Esophagus muscularis mucosa (tissue), 4 donors: ENCODE measurements at regions of chrX and their contacts with region 1.

Region 1: GRCh38 chrX:38774249-38774648 is 27.0 kb upstream of the MID1IP1 start:
- DNase-seq: no peak
- H3K4me3 ChIP-seq: no peak overlapping the region
- H3K27ac ChIP-seq: no peak overlapping the region
- H3K4me1 ChIP-seq: no peaks in the 10 kb centered on the region
- H3K27me3 ChIP-seq: no peaks in the 10 kb centered on the region
- CTCF ChIP-seq: no peak
- EP300 ChIP-seq: no peak
- POLR2A ChIP-seq: no peak

Region 2: DNA sequence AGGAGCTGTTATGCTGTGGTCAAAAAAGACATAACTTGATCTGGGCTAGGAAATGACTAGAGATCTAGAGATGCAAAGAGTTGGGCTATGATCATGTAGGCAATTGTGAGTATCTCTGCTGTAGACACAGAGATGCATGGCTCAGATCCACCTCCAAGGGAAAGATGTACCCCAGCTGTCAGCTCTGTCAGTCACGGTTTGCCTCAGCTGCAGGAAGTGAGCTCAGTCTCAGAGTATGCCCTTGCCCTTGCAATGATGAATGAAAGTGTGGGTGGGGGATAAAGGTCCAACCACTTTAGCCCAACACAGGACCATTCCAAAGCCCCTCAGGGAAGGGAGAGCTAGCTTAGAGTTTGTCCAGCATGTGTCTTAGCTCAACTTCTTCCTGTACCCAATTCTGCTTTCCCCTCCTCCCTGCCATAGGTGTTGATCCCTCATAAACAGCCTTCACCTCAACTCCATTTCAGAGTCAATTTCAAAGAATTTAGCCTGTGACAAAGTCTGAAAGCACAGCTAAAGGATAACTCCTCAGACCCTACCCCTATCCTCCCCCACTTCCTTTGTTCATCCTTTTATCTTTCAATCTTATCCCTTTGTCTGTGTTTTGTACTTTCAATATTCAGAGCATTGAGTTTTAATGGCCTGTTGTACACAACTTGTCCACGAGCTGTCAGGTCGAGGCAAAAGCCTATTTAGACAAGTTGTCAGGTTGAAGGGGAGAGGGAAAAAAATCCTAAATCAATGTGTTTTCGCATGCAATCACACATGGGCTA is 117.6 kb after region 1 on chrX:
- intact Hi-C with region 1: no loop called
- DNase-seq: no peak
- H3K4me3 ChIP-seq: no peak overlapping the region
- H3K27ac ChIP-seq: no peak overlapping the region
- H3K4me1 ChIP-seq: no peaks in the 10 kb centered on the region
- H3K27me3 ChIP-seq: no peaks in the 10 kb centered on the region
- CTCF ChIP-seq: no peak
- EP300 ChIP-seq: no peak
- POLR2A ChIP-seq: no peak

Region 3: DNA sequence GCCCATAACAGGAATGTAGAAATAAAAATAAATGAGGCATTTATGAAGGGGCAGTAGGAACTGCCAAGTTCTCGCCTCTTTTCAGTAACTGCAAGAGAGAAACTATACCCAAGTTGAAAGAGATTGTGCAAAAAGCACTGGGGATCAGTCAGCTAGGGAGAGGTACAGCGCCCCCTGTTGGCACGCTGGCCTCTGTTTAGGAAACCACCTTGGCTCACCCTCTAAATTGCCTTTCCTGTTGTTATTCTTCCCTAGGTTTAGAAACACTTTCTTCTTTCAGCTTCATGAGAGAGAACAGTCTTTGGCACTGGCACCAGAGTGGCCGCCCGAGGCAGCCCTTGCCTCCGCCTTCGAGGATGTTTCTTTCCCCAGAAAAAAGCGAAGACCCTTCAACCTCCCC is 375.5 kb after region 1 on chrX:
- intact Hi-C with region 1: loop called (anchors 5 kb)
- DNase-seq: no peak
- H3K4me3 ChIP-seq: no peak overlapping the region
- H3K27ac ChIP-seq: no peak overlapping the region
- H3K4me1 ChIP-seq: no peaks in the 10 kb centered on the region
- H3K27me3 ChIP-seq: peaks cover 0 to under 1% (median 0%) of the 10 kb centered on the region in 4 donors
- CTCF ChIP-seq: peak; percentile 47 to 58 (median 57)
- EP300 ChIP-seq: no peak
- POLR2A ChIP-seq: no peak

Region 4: GRCh38 chrX:39242187-39242586 is 467.9 kb after region 1 on chrX:
- intact Hi-C with region 1: no loop called
- DNase-seq: no peak
- H3K4me3 ChIP-seq: no peak overlapping the region
- H3K27ac ChIP-seq: no peak overlapping the region
- H3K4me1 ChIP-seq: no peaks in the 10 kb centered on the region
- H3K27me3 ChIP-seq: no peaks in the 10 kb centered on the region
- CTCF ChIP-seq: peak in 1 of 3 experiments; percentile 21
- EP300 ChIP-seq: no peak
- POLR2A ChIP-seq: no peak